ENCODE measurements at regions of chr6 and their contacts with region 1.

Region 1: DNA sequence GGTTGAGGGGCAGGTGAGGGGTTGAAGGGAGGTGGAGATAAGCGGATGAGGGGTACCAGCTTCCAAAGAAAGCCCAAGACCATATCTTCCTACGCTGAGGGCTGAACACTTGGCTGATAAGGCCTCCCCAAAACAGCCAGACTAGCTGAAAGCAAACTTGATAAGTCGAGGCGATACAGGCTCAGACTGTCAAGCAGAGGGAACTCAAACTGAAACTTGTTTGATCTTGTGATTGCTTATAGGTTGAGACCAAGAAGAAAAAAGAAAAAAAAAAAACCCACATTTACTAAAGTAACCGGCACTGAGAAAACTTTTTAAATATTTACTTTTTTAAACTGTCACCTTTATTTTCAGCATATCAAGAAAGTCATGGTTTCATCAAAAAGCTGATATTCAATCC is 73.6 kb downstream of the TRERF1 start:
- DNase-seq: peak; percentile 57
- ATAC-seq: peak; percentile 86
- H3K4me3 Mint-ChIP-seq: peak overlapping the region; percentile 66
- H3K27ac Mint-ChIP-seq: peak overlapping the region; percentile 86
- H3K4me1 Mint-ChIP-seq: peaks cover 63% of the 10 kb centered on the region
- H3K27me3 Mint-ChIP-seq: no peaks in the 10 kb centered on the region

Region 2: GRCh38 chr6:42352856-42353564 is 25.1 kb before region 1 on chr6:
- CTCF ChIA-PET with region 1: no interaction called
- POLR2A ChIA-PET with region 1: no interaction called
- DNase-seq: no peak
- ATAC-seq: no peak
- H3K4me3 Mint-ChIP-seq: no peak overlapping the region
- H3K27ac Mint-ChIP-seq: no peak overlapping the region
- H3K4me1 Mint-ChIP-seq: peaks cover 9% of the 10 kb centered on the region
- H3K27me3 Mint-ChIP-seq: no peaks in the 10 kb centered on the region

Region 3: GRCh38 chr6:42367353-42368011 is 10.6 kb before region 1 on chr6:
- CTCF ChIA-PET with region 1: interaction called, 17 read pairs
- POLR2A ChIA-PET with region 1: interaction called, 11 read pairs
- DNase-seq: peak; percentile 48
- ATAC-seq: peak; percentile 59
- H3K4me3 Mint-ChIP-seq: peak overlapping the region; percentile 64
- H3K27ac Mint-ChIP-seq: peak overlapping the region; percentile 90
- H3K4me1 Mint-ChIP-seq: peaks cover 69% of the 10 kb centered on the region
- H3K27me3 Mint-ChIP-seq: no peaks in the 10 kb centered on the region

Measured in activated CD8-positive, alpha-beta T cell treated with anti-CD3 and anti-CD28 coated beads, Interleukin-2, amount 10 ng/mL, durations not matched to agents 7 days and 5 days (primary cell).